AG04449 (cell line): ENCODE measurements at regions of chr2 and their contacts with region 1.

Region 1: DNA sequence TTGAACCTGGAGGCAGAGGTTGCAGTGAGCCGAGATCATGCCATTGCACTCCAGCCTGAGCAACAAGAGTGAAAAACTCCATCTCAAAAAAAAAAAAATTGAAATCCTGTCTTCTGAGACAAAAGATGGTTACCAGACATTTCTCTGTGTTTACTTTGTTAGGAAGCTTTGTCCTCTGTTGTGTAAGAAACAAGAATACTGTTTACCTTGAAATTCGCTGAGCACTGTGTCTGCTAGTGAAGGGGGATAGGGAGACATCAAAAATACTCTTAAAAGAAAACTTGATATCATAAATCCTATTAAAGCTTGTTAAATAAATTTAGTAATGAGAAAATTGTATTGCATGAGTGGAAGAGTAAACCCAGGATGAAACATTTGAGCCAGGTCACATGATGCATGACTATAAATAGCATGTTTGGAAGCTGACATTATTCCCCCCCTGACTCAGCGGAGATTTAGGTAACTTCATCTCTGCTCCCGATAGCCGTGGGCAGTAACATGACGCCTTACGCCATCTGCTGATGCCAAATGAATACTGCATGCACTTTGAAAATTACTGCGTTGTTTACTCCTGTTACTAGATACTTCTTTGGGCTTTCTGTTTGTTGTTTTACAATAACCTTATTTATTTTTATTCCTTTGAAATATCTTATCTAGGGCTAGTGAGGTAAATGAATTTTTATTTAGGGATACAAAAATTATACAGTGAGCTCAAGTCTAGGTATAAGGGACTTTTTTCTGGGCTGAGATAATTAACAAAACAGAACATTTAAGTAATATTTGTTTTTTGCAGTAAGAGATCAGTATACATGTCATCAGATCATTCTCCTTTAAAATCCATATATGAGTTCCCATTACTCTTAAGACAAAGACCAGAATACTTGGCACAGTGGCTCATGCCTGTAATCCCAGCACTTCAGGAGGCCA is 134.9 kb downstream of the MAP3K20 start:
- DNase-seq: peak; percentile 86
- H3K4me3 ChIP-seq: no peak overlapping the region
- CTCF ChIP-seq: peak; percentile 84

Region 2: GRCh38 chr2:172972005-172972619 is 238.4 kb before region 1 on chr2:
- CTCF ChIA-PET with region 1: interaction called, 14 read pairs
- POLR2A ChIA-PET with region 1: no interaction called
- DNase-seq: no peak
- H3K4me3 ChIP-seq: no peak overlapping the region
- CTCF ChIP-seq: peak; percentile 85

Region 3: GRCh38 chr2:173048897-173049661 is 161.5 kb before region 1 on chr2:
- CTCF ChIA-PET with region 1: interaction called, 14 read pairs
- POLR2A ChIA-PET with region 1: no interaction called
- DNase-seq: peak; percentile 90
- H3K4me3 ChIP-seq: no peak overlapping the region; the same call in 1 of the 2 replicates
- CTCF ChIP-seq: no peak

Region 4: DNA sequence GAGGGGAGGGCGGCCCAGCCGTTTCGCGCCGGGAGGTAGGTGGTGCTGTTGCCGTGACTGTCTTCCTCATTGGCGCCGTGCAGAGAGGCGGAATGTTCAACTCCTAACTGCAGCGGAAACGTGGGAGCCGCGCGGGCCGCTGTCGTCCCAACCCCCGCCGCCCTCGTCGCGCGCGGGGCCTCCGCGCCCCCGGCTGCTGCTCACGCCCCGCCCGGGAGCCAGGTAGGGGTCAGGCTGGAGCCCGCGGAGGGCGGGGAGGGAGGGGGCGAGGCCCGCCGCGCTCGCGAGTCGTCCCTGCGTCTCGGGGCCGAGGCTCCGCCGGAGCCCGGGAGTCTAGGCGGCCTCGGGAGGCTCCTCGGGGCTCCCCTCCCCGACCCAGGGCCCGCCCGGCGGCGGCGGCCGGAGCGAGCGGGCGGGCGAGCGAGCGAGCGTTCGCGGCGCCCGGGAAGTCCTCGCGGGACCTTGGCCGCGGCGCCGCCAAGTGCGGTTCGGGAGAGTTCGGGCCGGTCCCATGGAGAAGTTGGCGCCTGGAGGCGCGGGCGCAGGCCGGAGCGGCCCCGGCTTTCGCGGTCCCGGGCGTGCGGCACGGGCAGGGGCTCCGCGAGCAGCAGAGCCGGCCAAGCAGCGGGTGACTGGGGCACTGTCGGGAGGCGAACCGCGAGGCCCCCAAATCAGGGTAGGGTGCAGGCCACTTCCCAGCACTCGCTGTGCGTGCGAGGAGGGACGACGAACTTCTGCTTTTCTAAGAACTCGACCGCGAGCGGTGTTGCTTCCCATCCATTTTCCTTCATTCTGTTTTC is 134.6 kb before region 1 on chr2 and contains the start of gene MAP3K20:
- CTCF ChIA-PET with region 1: interaction called, 17 read pairs
- POLR2A ChIA-PET with region 1: no interaction called
- DNase-seq: no peak
- H3K4me3 ChIP-seq: peak within 1 kb of the TSS; percentile 74
- CTCF ChIP-seq: peak; percentile 80

Region 5: GRCh38 chr2:173187911-173188788 is 22.4 kb before region 1 on chr2:
- CTCF ChIA-PET with region 1: interaction called, 23 read pairs
- POLR2A ChIA-PET with region 1: no interaction called
- DNase-seq: no peak
- H3K4me3 ChIP-seq: no peak overlapping the region
- CTCF ChIP-seq: no peak

Region 6: GRCh38 chr2:173223871-173224270 is 13.3 kb after region 1 on chr2:
- CTCF ChIA-PET with region 1: interaction called, 16 read pairs
- POLR2A ChIA-PET with region 1: no interaction called
- DNase-seq: no peak
- H3K4me3 ChIP-seq: no peak overlapping the region
- CTCF ChIP-seq: no peak